ENCODE measurements at regions of chr7 and their contacts with region 1.

Region 1: DNA sequence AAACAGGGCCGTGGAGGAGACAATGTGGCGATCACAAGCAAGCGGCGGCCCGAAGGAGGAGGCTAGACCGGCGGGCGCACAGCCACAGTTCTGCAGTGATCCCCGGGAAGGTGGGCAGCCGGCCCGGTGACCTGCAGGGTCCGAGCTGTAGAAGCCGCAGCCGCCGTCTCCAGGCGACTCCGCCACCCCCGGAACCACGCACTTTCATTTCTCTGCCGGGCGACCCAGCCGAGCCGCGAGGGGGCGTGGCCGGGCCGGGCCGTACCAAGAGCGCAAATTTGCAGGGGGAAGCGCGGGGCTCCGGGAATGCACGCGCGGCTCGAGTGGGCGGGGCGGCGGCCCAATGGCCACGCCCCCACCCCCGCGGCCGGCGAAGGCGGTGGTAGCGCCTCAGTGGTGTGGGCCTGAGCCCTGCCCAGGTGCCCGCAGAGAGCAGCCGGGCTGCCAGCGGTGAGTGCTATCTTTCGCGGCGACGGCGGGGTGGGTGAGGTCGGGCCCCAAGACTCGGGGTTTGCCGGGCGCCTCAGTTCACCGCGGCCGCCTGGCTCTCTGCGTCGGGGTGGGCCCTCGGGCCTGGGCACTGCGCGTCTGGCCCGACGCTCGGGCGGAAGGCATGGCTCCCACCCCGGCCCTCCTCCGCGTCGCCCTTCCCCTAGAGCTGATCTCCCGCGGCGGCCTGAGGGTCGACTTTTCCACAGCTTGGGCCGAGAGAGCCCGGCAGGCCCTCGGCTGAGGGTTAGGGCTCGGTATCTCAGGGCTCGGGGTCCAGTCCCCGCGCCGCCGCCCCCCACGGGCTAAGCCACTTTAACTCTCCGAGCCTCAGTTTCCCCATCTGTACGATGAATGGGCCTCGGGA is at the start of gene POR:
- DNase-seq: peak; percentile 92 to 99 (median 95)
- H3K4me3 ChIP-seq: peak within 1 kb of the TSS; percentile 60 to 100 (median 97)
- H3K27ac ChIP-seq: peak within 1 kb of the TSS; percentile 9 to 97 (median 91)
- H3K27me3 ChIP-seq: no peaks in the 10 kb centered on the region
- CTCF ChIP-seq: peak in 53 of 56 donors; percentile 12 to 73 (median 46)
- total RNA-seq, gene POR: 52.3 to 111 (median 78.1) TPM

Region 2: GRCh38 chr7:75667938-75668337 is 247.0 kb before region 1 on chr7:
- intact Hi-C with region 1: no loop called
- DNase-seq: no peak
- H3K4me3 ChIP-seq: no peak overlapping the region
- H3K27ac ChIP-seq: peak overlapping the region in 12 of 59 donors; percentile 10 to 54 (median 31)
- H3K27me3 ChIP-seq: no peaks in the 10 kb centered on the region
- CTCF ChIP-seq: no peak

Region 3: GRCh38 chr7:75878769-75879611 is 36.0 kb before region 1 on chr7 and contains the start of gene RHBDD2:
- intact Hi-C with region 1: loop called (anchors 2 to 5 kb)
- DNase-seq: peak; percentile 88 to 96 (median 95)
- H3K4me3 ChIP-seq: peak within 1 kb of the TSS; percentile 70 to 99 (median 95)
- H3K27ac ChIP-seq: peak within 1 kb of the TSS; percentile 73 to 99 (median 96)
- H3K27me3 ChIP-seq: no peaks in the 10 kb centered on the region
- CTCF ChIP-seq: peak in 50 of 56 donors; percentile 10 to 67 (median 40)
- total RNA-seq, gene RHBDD2: 127 to 309 (median 221) TPM

Region 4: DNA sequence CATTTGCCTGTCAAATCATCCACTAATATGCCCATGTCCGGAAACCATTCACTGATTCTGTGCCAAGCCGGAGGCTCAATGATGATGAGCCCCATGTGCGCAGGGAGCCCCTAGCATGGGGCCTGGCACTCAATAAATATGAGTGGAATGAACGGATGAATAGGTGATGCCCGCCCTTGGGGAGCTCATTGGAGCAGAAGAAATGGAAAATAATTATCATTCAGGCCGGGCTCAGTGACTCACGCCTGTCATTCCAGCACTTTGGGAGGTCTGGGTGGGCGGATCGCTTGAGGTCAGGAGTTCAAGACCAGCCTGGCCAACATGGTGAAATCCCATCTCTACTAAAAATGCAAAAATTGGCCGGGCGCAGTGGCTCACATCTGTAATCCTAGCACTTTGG is 25.1 kb before region 1 on chr7:
- intact Hi-C with region 1: loop called in 1 of 2 experiments (anchors 2 kb)
- DNase-seq: no peak
- H3K4me3 ChIP-seq: no peak overlapping the region
- H3K27ac ChIP-seq: peak overlapping the region in 2 of 59 donors; percentile 67 to 77
- H3K27me3 ChIP-seq: no peaks in the 10 kb centered on the region
- CTCF ChIP-seq: no peak

Region 5: DNA sequence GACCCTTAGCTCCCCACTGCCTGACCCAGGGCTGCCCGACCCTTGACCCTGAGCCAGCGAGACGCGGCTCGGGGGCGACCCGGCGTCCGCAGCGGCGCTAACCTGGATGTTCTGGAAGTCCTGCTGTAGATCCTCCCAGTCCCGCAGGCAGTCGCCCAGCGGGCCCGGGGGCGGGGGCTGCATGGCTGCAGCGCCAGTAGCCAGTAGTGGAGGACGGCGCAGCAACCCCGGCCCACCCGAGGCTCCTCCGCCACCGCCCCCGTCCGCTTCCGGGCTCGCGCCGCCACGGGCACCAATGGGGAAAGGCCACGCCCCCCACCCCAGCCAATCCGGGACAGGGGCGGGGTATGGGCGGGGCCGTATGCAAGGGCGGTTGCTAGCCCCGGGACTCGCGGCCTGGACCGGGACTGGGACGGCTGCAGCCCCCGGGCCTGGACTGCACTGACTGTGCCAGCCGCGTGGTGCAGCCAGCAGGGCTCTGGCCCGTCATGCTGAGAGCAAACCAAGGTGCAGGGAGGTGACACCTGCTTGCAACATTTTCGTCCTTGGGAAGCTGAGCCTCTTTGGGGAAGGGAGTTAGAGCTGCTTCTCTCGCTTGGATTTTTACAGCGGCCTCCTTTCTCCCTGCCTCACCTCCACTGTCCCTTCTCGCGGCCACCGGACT is 79.6 kb after region 1 on chr7 and contains the start of gene TMEM120A:
- intact Hi-C with region 1: loop called (anchors 2 kb)
- DNase-seq: peak; percentile 86 to 98 (median 92)
- H3K4me3 ChIP-seq: peak within 1 kb of the TSS; percentile 58 to 98 (median 91)
- H3K27ac ChIP-seq: peak within 1 kb of the TSS; percentile 58 to 97 (median 90)
- H3K27me3 ChIP-seq: no peaks in the 10 kb centered on the region
- CTCF ChIP-seq: peak in 45 of 56 donors; percentile 4 to 59 (median 39)
- total RNA-seq, gene TMEM120A: 32.6 to 87.9 (median 49.5) TPM

Region 6: GRCh38 chr7:76089923-76090381 is 175.0 kb after region 1 on chr7:
- intact Hi-C with region 1: no loop called
- DNase-seq: no peak
- H3K4me3 ChIP-seq: no peak overlapping the region
- H3K27ac ChIP-seq: no peak overlapping the region
- H3K27me3 ChIP-seq: peaks cover 0 to 4% (median 0%) of the 10 kb centered on the region in 45 donors
- CTCF ChIP-seq: no peak